Activated B cell treated with CpG ODN at 0.5 μM for 24 hours (primary cell): ENCODE measurements at regions of chr1 and their contacts with region 1.

Region 1: GRCh38 chr1:10032590-10033358 is at the start of gene UBE4B:
- DNase-seq: peak; percentile 99
- ATAC-seq: peak; percentile 96
- H3K4me3 Mint-ChIP-seq: peak within 1 kb of the TSS; percentile 96
- H3K27ac Mint-ChIP-seq: peak within 1 kb of the TSS; percentile 93
- H3K4me1 Mint-ChIP-seq: peaks cover 24% of the 10 kb centered on the region
- H3K27me3 Mint-ChIP-seq: no peaks in the 10 kb centered on the region
- CTCF ChIP-seq: peak; percentile 55
- total RNA-seq, gene UBE4B: 41.1 and 44.7 TPM in 2 replicates

Region 2: DNA sequence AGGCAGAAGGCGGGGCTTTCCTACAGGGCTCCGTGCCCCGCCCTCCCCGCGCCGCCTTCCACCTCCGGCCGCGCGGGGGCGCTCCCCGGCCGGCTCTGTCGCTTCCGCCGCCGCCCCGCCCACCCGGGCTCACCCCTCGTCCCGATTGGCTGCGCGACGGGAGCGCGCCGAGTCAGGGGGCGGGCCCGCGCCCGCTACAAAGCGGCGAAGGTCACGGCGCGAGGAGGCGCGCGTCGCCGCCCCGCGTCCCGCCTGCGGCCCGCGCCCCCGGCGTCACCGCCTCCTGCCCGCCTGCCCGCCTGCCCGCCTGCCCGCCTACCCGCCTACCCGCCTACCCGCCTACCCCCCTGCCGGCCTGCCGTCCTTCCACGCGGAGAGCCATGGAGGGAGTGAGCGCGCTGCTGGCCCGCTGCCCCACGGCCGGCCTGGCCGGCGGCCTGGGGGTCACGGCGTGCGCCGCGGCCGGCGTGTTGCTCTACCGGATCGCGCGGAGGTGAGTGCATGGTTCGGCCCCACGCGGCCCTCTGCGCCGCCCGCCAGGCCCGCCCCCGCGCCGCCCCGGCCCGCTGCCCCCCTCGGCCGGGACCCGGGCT is 444.1 kb before region 1 on chr1 and contains the start of gene TMEM201:
- CTCF ChIA-PET with region 1: no interaction called
- POLR2A ChIA-PET with region 1: no interaction called
- intact Hi-C with region 1: loop called (anchors 1 kb)
- DNase-seq: peak; percentile 98
- ATAC-seq: peak; percentile 91
- H3K4me3 Mint-ChIP-seq: peak within 1 kb of the TSS; percentile 84
- H3K27ac Mint-ChIP-seq: peak within 1 kb of the TSS; percentile 12
- H3K4me1 Mint-ChIP-seq: peaks cover 38% of the 10 kb centered on the region
- H3K27me3 Mint-ChIP-seq: no peaks in the 10 kb centered on the region
- CTCF ChIP-seq: no peak
- total RNA-seq, gene TMEM201: 8.1 and 9.4 TPM in 2 replicates

Region 3: GRCh38 chr1:9874959-9875635 is 157.7 kb before region 1 on chr1:
- CTCF ChIA-PET with region 1: no interaction called
- POLR2A ChIA-PET with region 1: no interaction called
- intact Hi-C with region 1: loop called (anchors 1 kb)
- DNase-seq: peak; percentile 59
- ATAC-seq: peak; percentile 97
- H3K4me3 Mint-ChIP-seq: no peak overlapping the region
- H3K27ac Mint-ChIP-seq: peak overlapping the region; percentile 11
- H3K4me1 Mint-ChIP-seq: peaks cover 5% of the 10 kb centered on the region
- H3K27me3 Mint-ChIP-seq: no peaks in the 10 kb centered on the region
- CTCF ChIP-seq: no peak

Region 4: DNA sequence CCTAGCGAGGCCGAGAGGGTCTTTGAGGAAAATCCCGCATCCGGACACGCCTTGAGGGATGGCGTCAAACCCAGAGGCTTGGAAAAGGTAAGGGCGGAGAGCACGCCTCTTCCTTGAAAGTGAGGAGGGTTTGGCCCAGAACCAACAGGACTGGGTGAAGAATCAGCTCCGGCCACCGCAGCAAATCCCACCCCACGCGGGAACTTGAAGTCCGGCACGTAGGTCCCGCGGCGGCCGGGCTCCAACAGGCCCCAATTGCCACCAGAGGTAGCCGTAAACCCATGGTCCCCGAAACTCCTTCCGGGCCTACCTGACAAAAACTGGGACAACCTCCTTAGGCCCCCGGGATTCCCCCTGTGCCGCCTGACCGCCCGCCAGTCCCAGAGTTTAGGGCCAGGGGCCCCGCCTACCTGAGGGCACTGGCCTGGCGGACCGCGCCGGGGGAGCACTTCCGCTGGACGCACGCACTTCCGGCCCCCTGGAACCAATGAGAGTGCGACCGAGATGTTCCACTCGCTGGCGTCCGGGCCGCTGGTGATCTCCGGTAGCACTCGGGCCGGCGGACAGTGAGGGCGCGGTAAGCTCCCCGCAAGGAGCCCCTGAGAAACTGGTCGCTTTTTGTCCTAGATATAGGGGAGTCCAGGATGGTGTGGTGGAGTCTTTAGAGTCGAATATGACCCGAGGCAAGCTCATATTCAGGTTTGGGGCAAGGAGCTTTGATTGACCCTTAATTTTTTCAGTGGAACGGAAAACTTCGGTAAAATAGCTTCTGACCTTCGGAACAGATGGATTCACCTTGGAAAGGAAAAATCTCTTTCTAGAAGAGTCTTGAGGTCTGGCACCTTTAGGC is 89.6 kb before region 1 on chr1 and contains the starts of genes LZIC and NMNAT1:
- CTCF ChIA-PET with region 1: no interaction called
- POLR2A ChIA-PET with region 1: interaction called, 7 read pairs
- intact Hi-C with region 1: loop called (anchors 1 kb)
- DNase-seq: peak; percentile 92
- ATAC-seq: peak; percentile 94
- H3K4me3 Mint-ChIP-seq: peak within 1 kb of the TSS; percentile 98
- H3K27ac Mint-ChIP-seq: peak within 1 kb of the TSS; percentile 98
- H3K4me1 Mint-ChIP-seq: peaks cover 30% of the 10 kb centered on the region
- H3K27me3 Mint-ChIP-seq: no peaks in the 10 kb centered on the region
- CTCF ChIP-seq: no peak
- total RNA-seq, gene LZIC: 19.3 and 20.9 TPM in 2 replicates
- total RNA-seq, gene NMNAT1: 5.8 and 7.5 TPM in 2 replicates

Region 5: DNA sequence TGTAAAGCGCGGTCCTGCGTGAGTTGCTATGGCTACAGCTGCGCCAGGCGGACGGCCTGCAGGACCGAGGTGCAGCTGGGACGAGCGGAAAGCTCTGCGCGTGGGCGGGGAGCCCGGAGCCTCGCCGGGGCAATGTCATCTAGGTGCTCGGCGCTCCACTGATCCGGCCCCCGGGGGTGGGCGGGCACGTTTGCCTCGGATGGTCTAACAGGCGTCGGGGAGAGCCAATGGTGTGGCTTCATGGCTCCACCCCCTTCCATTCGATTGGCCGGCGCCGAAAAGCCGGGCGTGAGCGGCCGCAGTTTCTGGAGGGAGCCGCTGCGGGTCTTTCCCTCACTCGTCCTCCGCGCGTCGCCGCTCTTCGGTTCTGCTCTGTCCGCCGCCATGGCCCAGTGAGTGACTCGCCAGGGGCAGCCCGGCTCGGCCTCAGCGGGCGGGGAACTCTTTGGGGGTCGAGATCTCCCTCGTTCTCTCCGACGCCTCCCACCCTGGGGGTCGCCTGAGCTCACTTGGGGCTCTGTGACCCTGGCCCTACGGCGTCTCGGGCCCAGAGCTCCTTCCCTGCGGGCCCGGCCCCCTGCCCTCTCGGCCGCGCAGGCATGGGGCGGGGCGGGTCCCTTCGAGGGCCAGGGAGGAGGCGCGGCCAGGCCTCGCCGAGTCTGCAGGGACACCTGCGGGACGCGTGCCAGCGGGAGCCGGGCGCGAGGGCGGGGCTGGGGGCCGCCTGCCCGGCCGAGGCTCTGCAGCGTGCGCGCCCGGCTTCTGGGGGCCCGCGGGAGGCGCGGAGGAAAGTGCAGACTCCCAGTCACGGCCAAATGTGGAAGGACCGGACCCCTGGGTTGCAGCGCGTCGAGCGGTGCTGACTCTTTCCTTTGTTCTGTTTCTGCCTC is 366.2 kb after region 1 on chr1 and contains the start of gene PGD:
- CTCF ChIA-PET with region 1: no interaction called
- POLR2A ChIA-PET with region 1: no interaction called
- intact Hi-C with region 1: loop called (anchors 1 kb)
- DNase-seq: peak; percentile 95
- ATAC-seq: peak; percentile 94
- H3K4me3 Mint-ChIP-seq: peak within 1 kb of the TSS; percentile 92
- H3K27ac Mint-ChIP-seq: peak within 1 kb of the TSS; percentile 87
- H3K4me1 Mint-ChIP-seq: peaks cover 22% of the 10 kb centered on the region
- H3K27me3 Mint-ChIP-seq: no peaks in the 10 kb centered on the region
- CTCF ChIP-seq: no peak
- total RNA-seq, gene PGD: 108 and 112 TPM in 2 replicates

Region 6: DNA sequence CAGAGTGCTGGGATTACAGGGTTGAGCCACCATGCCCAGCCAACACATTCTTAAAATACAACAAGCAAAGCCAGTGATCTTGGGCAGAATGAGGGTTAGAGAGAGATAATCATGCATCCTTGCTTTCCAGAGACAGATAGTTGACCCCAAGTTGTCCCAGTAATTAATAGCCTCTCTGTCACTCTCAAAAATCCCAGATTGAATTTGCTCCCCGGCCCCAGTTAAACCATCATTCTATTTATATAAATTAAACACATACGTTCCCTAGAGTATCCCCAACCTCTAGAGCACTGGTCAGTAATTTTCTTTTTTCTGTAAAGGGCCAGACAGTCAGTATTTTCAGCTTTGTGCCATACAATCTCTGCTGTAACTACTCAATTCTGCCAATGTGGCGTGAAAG is 963.3 kb after region 1 on chr1:
- CTCF ChIA-PET with region 1: no interaction called
- POLR2A ChIA-PET with region 1: no interaction called
- intact Hi-C with region 1: no loop called
- DNase-seq: no peak
- ATAC-seq: no peak
- H3K4me3 Mint-ChIP-seq: no peak overlapping the region
- H3K27ac Mint-ChIP-seq: no peak overlapping the region
- H3K4me1 Mint-ChIP-seq: peaks cover 2% of the 10 kb centered on the region
- H3K27me3 Mint-ChIP-seq: no peaks in the 10 kb centered on the region
- CTCF ChIP-seq: no peak